IMR-90 (cell line): ENCODE measurements at regions of chr12 and their contacts with region 1.

Region 1: DNA sequence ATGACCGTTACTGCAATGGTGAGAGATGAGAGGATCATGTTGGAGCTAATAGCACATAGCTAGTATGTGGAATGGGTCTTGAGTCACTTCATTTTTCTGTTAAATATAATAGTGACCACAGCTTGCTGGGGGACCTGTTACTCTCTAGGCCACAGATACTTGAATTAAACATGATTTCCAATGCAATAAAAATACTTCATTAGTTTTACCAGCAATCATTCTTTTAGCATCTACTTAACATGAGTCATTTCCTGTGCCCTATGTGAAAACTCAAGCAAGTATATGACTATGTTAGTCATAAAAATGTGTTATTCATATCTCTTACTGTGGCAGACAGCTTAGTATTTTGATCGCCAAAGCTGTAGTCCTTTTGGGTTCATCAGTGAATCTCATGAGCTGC is 798.8 kb downstream of the SLC16A7 start:
- DNase-seq: peak; percentile 85
- ATAC-seq: peak; percentile 87
- H3K4me3 ChIP-seq: no peak overlapping the region
- H3K27ac ChIP-seq: no peak overlapping the region
- H3K4me1 ChIP-seq: no peaks in the 10 kb centered on the region
- H3K27me3 ChIP-seq: no peaks in the 10 kb centered on the region
- CTCF ChIP-seq: no peak
- POLR2A ChIP-seq: no peak
- RAD21 ChIP-seq: no peak

Region 2: DNA sequence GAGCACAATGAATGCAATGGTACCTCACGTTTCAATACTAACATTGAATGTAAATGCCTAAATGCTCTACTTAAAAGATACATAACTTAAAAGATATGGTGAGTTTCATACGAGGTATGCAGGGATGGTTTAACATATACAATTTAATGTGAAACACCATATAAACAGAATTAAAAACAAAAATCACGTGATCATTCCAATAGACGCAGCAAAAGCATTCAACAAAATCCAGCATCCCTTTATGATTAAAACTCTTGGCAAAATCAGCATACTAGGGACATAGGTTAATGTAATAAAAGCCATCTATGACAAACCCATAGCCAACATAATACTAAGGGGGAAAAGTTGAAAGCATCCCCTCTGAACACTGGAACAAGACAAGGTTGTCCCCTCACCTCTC is 46.9 kb after region 1 on chr12:
- CTCF ChIA-PET with region 1: no interaction called
- POLR2A ChIA-PET with region 1: no interaction called
- dilution Hi-C with region 1: no loop called
- in situ Hi-C with region 1: no loop called
- intact Hi-C with region 1: loop called (anchors 10 kb)
- DNase-seq: no peak
- ATAC-seq: no peak
- H3K4me3 ChIP-seq: no peak overlapping the region
- H3K27ac ChIP-seq: no peak overlapping the region
- H3K4me1 ChIP-seq: no peaks in the 10 kb centered on the region
- H3K27me3 ChIP-seq: no peaks in the 10 kb centered on the region
- CTCF ChIP-seq: no peak
- POLR2A ChIP-seq: no peak
- RAD21 ChIP-seq: no peak